Activated CD4-positive, alpha-beta memory T cell treated with anti-CD3 and anti-CD28 coated beads, Interleukin-2, amount 10 ng/mL, durations not matched to agents 7 days and 5 days (primary cell): ENCODE measurements at regions of chr20 and their contacts with region 1.

Region 1: DNA sequence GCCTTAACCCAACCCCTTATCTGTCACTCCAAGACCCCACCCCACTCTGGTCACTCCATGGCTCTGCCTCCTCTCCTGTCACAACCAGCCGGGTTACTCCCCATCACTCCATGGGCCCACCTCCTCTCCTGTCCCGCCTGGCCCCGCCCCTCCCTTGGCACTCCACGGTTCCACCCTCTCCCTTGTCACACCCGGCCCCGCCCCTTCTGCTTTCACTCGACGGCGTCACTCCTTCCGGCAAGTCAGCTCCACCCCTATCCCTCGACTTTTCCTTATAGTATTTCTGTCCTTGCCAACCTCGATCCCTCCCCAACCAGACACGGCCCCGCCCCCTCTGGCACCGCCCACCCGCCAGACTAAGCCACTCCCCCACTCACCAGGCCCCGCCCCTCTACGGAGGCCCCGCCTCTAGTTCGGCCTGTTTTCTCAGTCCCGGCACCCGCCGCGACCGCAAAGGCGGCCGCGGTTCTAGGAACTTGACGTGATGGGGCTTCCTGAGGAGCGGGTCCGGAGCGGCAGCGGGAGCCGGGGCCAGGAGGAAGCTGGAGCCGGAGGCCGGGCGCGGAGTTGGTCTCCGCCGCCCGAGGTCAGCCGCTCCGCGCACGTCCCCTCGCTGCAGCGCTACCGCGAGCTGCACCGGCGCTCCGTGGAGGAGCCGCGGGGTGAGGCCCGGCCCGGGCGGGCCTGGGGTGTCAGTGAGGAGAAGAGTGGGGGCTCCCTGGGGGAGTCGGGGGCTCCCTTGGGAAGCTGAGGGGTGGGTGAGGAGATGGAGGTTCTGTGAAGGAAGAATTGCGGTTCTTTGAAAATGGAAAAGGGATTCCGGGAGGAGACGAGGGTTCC is at the start of gene ACSS2:
- DNase-seq: peak; percentile 99
- H3K4me3 Mint-ChIP-seq: peak within 1 kb of the TSS; percentile 93
- H3K27ac Mint-ChIP-seq: peak within 1 kb of the TSS; percentile 77
- H3K4me1 Mint-ChIP-seq: peaks cover 69% of the 10 kb centered on the region
- H3K27me3 Mint-ChIP-seq: peaks cover 2% of the 10 kb centered on the region
- total RNA-seq, gene ACSS2: 43.5 to 47.5 TPM

Region 2: DNA sequence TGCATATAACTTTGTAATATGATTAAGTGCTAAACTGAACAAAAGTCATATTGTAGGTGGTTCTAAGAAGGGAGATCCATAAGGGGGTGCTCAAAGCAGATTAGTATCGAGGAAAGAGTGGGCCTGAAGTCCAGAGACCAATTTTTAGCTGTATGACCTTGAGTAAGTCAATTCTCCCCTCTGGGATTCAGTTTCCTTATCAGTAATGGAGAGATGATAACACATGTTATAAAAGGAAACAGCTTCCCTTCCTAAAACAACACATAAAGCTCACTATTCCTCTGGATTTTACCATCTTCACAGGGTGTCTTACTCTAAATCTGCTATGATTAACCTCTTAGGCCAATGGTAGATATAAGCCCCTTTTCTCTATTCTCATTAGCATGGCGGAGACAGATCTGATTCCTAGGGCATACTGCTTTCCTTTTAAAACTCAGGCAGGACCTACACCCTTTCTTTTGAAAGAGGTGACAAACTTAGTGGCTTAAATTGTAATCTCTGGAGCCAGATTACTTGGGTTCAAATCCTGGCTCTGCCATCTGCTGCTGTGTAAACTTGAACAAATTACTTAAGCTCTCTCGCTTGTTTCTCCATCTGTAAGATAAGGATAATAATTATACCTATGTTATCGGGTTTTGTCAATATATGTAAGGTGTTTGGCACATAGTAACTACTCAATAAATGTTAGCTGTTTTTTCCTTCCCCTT is 39.5 kb after region 1 on chr20:
- CTCF ChIA-PET with region 1: interaction called, 4 read pairs
- POLR2A ChIA-PET with region 1: interaction called, 19 read pairs
- DNase-seq: no peak
- H3K4me3 Mint-ChIP-seq: no peak overlapping the region
- H3K27ac Mint-ChIP-seq: no peak overlapping the region
- H3K4me1 Mint-ChIP-seq: peaks cover 38% of the 10 kb centered on the region
- H3K27me3 Mint-ChIP-seq: no peaks in the 10 kb centered on the region

Region 3: DNA sequence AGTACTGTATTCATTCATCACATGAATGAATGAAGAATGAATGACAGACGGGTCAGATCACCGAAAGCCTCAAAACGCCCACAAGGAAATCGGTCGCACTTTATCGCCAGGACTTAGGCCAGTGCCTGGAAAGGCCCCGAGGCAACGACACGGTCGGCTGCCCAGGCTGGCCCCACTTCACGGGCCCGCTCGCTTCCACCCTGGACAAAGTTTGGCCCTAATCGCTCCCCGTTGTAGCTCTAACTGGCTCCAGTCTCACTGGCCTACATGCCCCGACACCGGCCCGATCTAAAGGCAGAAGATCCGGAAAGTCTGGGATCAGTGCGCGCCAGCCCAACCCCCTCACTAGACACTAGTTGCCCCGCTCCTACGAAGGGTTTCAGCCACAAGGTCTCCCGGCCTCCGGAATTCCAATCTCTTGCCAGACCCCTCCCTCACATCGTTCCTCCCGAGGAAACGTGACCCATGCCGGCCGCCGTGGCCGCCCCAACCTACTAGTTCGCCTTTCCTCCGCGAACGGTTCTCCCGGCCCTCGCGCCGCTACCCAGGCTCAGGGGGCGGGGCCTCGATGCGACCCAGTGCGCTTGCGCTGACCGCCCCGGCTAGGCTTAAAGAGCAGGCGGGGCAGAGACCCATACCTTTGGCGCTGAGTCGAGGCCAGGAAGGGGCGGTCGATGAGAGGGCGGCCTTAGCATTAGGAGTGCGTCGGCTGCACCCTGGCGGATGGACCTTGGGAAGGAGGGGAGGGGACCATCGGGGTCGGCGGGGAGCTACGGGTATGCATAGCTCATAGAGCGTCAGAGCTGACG is 79.1 kb after region 1 on chr20 and contains the starts of genes GSS and MYH7B:
- CTCF ChIA-PET with region 1: interaction called, 100 read pairs
- POLR2A ChIA-PET with region 1: interaction called, 37 read pairs
- DNase-seq: peak; percentile 98
- H3K4me3 Mint-ChIP-seq: peak within 1 kb of the TSS; percentile 98
- H3K27ac Mint-ChIP-seq: peak within 1 kb of the TSS; percentile 88
- H3K4me1 Mint-ChIP-seq: peaks cover 35% of the 10 kb centered on the region
- H3K27me3 Mint-ChIP-seq: no peaks in the 10 kb centered on the region
- total RNA-seq, gene GSS: 54.2 to 60.0 TPM
- total RNA-seq, gene MYH7B: 0.08 to 0.15 TPM

Region 4: DNA sequence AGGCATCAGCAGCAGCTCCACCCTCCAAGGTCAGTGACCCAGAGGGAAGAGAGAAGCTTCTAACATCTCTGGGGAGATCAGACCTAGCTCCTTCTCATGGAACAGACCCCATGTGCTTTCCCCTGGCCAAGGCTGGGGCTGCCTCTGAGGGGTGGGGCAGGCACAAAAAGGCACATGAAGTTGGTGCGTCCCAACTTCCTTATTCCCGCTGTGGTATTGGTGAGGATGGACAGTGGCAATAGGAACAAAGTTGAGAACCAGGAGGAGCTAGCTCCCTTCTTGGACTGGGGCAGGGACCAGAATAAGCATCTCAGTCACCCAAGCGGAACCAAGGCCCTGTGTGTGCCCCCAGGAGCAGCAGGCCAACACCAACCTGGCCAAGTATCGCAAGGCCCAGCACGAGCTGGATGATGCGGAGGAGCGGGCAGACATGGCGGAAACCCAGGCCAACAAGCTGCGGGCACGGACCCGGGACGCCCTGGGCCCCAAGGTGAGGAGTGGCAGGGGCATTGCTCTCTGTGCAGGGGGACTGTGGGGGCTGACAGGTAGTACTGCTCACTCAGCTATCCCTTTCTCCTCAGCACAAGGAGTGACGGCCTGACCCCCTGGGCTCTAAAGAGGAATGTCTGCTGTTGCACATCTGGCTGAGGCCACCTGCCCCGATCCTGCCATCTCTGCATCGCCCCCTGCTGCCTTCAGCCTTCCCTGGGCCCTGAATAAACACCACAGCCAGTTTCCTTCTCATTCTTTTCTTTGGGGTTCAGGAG is 125.4 kb after region 1 on chr20:
- CTCF ChIA-PET with region 1: interaction called, 10 read pairs
- POLR2A ChIA-PET with region 1: no interaction called
- DNase-seq: no peak
- H3K4me3 Mint-ChIP-seq: no peak overlapping the region
- H3K27ac Mint-ChIP-seq: no peak overlapping the region
- H3K4me1 Mint-ChIP-seq: peaks cover 5% of the 10 kb centered on the region
- H3K27me3 Mint-ChIP-seq: no peaks in the 10 kb centered on the region